ENCODE measurements at regions of chr6 and their contacts with region 1.

Region 1: GRCh38 chr6:43926634-43927524 is 156.9 kb downstream of the VEGFA start:
- DNase-seq: peak; percentile 77
- ATAC-seq: peak; percentile 68
- H3K4me3 Mint-ChIP-seq: no peak overlapping the region
- H3K27ac Mint-ChIP-seq: peak overlapping the region; percentile 68; the same call in 1 of the 2 replicates
- H3K4me1 Mint-ChIP-seq: peaks cover 15% of the 10 kb centered on the region
- H3K27me3 Mint-ChIP-seq: no peaks in the 10 kb centered on the region
- CTCF ChIP-seq: no peak

Region 2: DNA sequence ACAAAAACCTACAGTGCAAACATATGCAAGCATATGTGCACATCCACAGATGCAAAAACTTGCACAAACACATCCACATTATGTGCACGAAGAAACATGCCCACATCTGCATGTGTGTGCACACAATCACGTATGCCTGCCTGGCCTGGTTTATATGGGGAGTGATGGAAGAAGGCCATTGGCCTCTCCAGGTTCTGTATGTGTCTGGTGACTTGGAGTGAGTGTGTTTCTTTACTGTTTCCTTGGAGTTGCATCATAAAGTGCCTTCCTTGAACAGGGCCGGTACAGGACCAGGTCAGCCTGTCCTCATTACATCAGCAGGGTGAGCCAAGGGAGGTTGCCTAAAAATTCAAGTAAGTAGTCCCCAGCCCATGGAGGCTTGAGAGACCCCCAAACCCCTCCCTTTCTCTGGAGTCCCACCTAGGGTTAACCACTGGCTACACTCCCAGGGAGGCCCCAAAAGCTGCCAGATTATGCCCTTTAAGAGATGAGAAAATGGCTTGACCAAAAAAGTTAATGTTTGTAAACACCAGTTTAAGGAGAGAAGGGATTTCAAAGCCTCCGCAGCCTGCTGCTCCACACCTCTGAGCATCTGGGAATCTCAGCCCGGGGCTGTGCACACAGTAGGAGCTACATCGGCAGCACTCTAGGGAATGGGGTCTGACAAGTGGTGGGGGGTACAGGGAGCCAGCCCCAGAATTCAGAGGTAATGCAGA is 16.1 kb before region 1 on chr6:
- CTCF ChIA-PET with region 1: interaction called, 17 read pairs
- POLR2A ChIA-PET with region 1: interaction called, 22 read pairs
- DNase-seq: no peak
- ATAC-seq: peak; percentile 9; the same call in 1 of the 2 replicates
- H3K4me3 Mint-ChIP-seq: no peak overlapping the region
- H3K27ac Mint-ChIP-seq: no peak overlapping the region
- H3K4me1 Mint-ChIP-seq: peaks cover 35% of the 10 kb centered on the region
- H3K27me3 Mint-ChIP-seq: no peaks in the 10 kb centered on the region; the same call in 1 of the 2 replicates
- CTCF ChIP-seq: no peak

Region 3: DNA sequence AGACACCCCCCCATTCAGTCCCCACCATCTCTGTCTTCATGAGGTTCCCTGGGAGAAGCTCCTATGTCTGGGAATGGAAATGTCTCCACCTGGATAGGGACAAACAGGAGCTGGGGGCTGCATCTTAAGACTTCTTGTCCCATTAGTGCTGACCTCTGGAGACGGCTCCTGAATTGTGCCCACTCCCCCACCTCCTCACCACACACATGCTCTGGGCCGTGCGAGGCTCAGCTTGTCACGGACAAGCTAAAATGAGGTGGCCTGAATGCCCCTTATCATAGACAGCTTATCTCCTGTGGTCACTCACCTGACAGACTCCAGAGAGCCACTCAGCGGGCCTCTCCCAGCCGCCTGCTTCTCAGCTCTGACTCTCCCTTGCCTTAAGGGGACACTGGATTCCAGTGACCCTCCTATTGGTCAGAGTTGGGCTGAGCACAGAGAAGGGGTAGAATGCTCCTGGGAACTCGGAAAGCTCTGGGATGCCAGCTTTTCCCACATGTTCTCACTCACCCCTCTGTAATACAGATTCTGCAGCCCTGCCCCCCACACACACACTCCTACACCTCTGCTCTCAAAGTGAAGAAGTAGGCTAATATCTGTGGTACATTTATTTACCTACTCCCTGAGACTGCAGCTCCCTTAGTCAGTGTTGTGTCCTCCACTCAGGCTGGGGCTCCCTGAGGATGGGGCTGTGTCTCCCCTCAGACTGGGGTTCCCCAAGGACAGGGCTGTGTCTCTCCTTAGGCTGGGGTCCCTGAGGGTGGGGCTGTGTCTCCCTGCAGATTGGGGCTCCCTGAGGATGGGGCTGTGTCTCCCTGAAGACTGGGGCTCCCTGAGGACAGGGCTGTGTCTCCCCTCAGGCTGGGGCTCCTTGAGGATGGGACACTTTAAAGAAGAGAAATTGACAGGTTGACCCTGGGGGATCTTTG is 10.6 kb after region 1 on chr6:
- CTCF ChIA-PET with region 1: interaction called, 9 read pairs
- POLR2A ChIA-PET with region 1: interaction called, 10 read pairs
- DNase-seq: no peak
- ATAC-seq: peak; percentile 32; the same call in 1 of the 2 replicates
- H3K4me3 Mint-ChIP-seq: no peak overlapping the region
- H3K27ac Mint-ChIP-seq: peak overlapping the region; percentile 14; the same call in 1 of the 2 replicates
- H3K4me1 Mint-ChIP-seq: peaks cover 14% of the 10 kb centered on the region
- H3K27me3 Mint-ChIP-seq: no peaks in the 10 kb centered on the region
- CTCF ChIP-seq: no peak

Measured in WTC11 (cell line).